ENCODE measurements at regions of chr15 and their contacts with region 1.

Region 1: GRCh38 chr15:97234851-97235610 is 725.5 kb upstream of the ARRDC4 start:
- DNase-seq: peak; percentile 93
- H3K4me3 ChIP-seq: peak overlapping the region; percentile 44
- H3K27ac ChIP-seq: peak overlapping the region; percentile 94
- H3K4me1 ChIP-seq: peaks cover 46% of the 10 kb centered on the region
- H3K27me3 ChIP-seq: no peaks in the 10 kb centered on the region
- CTCF ChIP-seq: peak; percentile 95

Region 2: GRCh38 chr15:96356494-96357455 is 878.3 kb before region 1 on chr15:
- CTCF ChIA-PET with region 1: no interaction called
- POLR2A ChIA-PET with region 1: no interaction called
- intact Hi-C with region 1: loop called (anchors 2 kb)
- DNase-seq: peak; percentile 92
- H3K4me3 ChIP-seq: peak overlapping the region; percentile 60
- H3K27ac ChIP-seq: peak overlapping the region; percentile 93
- H3K4me1 ChIP-seq: peaks cover 70% of the 10 kb centered on the region
- H3K27me3 ChIP-seq: no peaks in the 10 kb centered on the region
- CTCF ChIP-seq: peak; percentile 97

Region 3: GRCh38 chr15:96657096-96657495 is 577.9 kb before region 1 on chr15:
- CTCF ChIA-PET with region 1: interaction called, 12 read pairs
- POLR2A ChIA-PET with region 1: no interaction called
- intact Hi-C with region 1: no loop called
- DNase-seq: no peak
- H3K4me3 ChIP-seq: no peak overlapping the region
- H3K27ac ChIP-seq: no peak overlapping the region
- H3K4me1 ChIP-seq: no peaks in the 10 kb centered on the region
- H3K27me3 ChIP-seq: no peaks in the 10 kb centered on the region
- CTCF ChIP-seq: peak; percentile 37; the same call in 1 of the 2 replicates

Region 4: DNA sequence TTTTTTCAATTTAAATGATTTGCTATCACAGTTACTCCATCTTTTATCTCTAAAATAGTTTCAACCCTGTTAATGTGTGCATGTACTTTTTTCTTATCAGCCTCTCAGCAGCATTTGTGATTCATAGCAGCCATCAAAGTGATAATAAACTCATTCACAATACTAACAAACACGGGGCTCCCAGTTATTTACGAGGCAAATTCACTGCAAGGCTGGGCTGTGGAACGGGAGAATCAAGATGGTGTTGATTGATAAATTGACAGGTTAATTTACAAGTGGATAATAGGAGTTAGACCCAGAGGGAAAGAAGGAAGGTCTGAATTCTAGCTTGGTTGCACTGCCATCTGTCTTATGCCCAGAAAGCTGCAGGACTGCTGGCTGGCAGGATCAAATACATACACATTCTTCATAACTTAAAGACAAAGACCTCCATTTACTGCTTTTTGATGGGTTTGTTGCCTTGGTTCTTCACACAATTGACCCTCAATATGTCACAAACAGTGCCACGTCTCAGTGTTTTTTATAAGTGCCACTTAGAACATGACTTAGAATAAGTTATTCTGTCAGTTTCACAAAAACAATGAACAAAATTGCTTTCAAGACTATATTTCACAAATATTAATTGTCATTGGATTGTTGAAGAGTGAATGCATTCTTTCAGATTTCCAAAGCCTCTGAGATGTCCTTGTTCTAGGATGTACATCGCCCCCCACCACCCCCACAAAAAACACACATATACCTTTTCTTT is 341.7 kb before region 1 on chr15:
- CTCF ChIA-PET with region 1: no interaction called
- POLR2A ChIA-PET with region 1: no interaction called
- intact Hi-C with region 1: loop called (anchors 1 kb)
- DNase-seq: peak; percentile 90
- H3K4me3 ChIP-seq: no peak overlapping the region
- H3K27ac ChIP-seq: peak overlapping the region; percentile 89
- H3K4me1 ChIP-seq: peaks cover 77% of the 10 kb centered on the region
- H3K27me3 ChIP-seq: no peaks in the 10 kb centered on the region
- CTCF ChIP-seq: peak; percentile 91

Region 5: GRCh38 chr15:97084650-97085049 is 150.4 kb before region 1 on chr15:
- CTCF ChIA-PET with region 1: no interaction called
- POLR2A ChIA-PET with region 1: no interaction called
- intact Hi-C with region 1: loop called (anchors 5 kb)
- DNase-seq: peak; percentile 61
- H3K4me3 ChIP-seq: no peak overlapping the region
- H3K27ac ChIP-seq: peak overlapping the region; percentile 84
- H3K4me1 ChIP-seq: peaks cover 95% of the 10 kb centered on the region
- H3K27me3 ChIP-seq: no peaks in the 10 kb centered on the region
- CTCF ChIP-seq: no peak

Region 6: DNA sequence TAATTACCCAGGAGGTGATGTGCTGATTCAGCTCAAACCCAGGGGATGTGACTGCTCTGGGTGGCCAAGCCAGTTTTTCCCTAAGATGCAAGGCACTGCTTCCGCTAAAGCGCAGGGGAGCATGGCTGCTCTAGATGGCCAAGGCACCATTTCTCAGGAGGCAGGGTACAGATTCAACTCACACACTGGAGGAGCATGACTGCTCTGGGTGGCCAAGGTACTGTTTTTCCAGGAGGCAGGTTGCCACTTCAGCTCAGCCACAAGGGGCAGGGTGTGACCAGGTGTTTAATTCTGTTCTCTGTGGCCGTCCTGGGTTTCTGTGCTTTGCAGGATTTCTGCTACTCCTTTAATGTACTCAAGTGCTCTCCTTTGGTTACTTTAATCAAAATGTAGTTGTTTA is 66.1 kb after region 1 on chr15:
- CTCF ChIA-PET with region 1: no interaction called
- POLR2A ChIA-PET with region 1: no interaction called
- intact Hi-C with region 1: no loop called
- DNase-seq: no peak
- H3K4me3 ChIP-seq: no peak overlapping the region
- H3K27ac ChIP-seq: no peak overlapping the region
- H3K4me1 ChIP-seq: no peaks in the 10 kb centered on the region
- H3K27me3 ChIP-seq: no peaks in the 10 kb centered on the region
- CTCF ChIP-seq: no peak

Region 7: GRCh38 chr15:97446141-97446540 is 211.1 kb after region 1 on chr15:
- CTCF ChIA-PET with region 1: no interaction called
- POLR2A ChIA-PET with region 1: no interaction called
- intact Hi-C with region 1: no loop called
- DNase-seq: peak; percentile 22
- H3K4me3 ChIP-seq: no peak overlapping the region
- H3K27ac ChIP-seq: no peak overlapping the region
- H3K4me1 ChIP-seq: no peaks in the 10 kb centered on the region
- H3K27me3 ChIP-seq: no peaks in the 10 kb centered on the region
- CTCF ChIP-seq: no peak

Region 8: GRCh38 chr15:97482521-97482920 is 247.5 kb after region 1 on chr15:
- CTCF ChIA-PET with region 1: no interaction called
- POLR2A ChIA-PET with region 1: no interaction called
- intact Hi-C with region 1: loop called (anchors 5 kb)
- DNase-seq: peak; percentile 57
- H3K4me3 ChIP-seq: no peak overlapping the region
- H3K27ac ChIP-seq: no peak overlapping the region
- H3K4me1 ChIP-seq: peaks cover 13% of the 10 kb centered on the region
- H3K27me3 ChIP-seq: no peaks in the 10 kb centered on the region
- CTCF ChIP-seq: peak; percentile 65

Measured in A673 (cell line).